ENCODE measurements at regions of chr19 and their contacts with region 1.

Region 1: DNA sequence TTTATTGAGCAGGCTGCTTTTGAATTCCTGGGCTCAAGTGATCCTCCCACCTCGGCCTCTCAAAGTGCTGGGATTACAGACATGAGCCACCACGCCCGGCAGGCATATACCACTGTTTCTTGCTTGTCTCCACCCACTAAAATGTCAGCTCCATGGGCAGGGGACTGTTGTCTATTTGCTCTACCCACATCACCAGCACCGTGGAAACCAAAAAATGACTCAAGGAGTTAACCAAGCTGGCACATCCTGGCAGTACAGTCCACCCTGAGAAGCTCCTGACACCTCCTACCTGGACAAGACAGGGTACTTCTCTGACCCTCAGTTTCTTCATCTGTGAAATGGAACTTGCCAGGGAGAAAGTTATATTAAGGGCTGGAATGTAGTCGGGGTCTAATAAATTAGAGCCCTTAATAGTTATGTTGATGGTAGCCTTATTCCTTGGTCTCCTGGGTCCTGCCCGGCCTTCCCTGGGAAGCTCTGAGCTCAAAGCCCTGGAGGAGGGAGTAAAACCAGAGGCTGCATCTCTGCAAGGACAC is 13.9 kb downstream of the RDH8 start:
- DNase-seq: no peak
- ATAC-seq: peak; percentile 55 to 57; a peak in 5 of 6 replicates
- H3K4me3 ChIP-seq: peak overlapping the region; percentile 26; the same call in 1 of the 3 replicates
- H3K27ac ChIP-seq: peak overlapping the region; percentile 60 to 76; a peak in 5 of 6 replicates
- H3K4me1 ChIP-seq: peaks cover 7% of the 10 kb centered on the region
- CTCF ChIP-seq: no peak
- EP300 ChIP-seq: no peak
- POLR2A ChIP-seq: no peak
- RAD21 ChIP-seq: no peak

Region 2: GRCh38 chr19:9934132-9934950 is 92.9 kb before region 1 on chr19:
- CTCF ChIA-PET with region 1: interaction called, 63 read pairs
- POLR2A ChIA-PET with region 1: no interaction called
- DNase-seq: peak; percentile 52 to 75
- ATAC-seq: peak; percentile 38 to 76
- H3K4me3 ChIP-seq: no peak overlapping the region
- H3K27ac ChIP-seq: no peak overlapping the region
- H3K4me1 ChIP-seq: peaks cover 17% of the 10 kb centered on the region
- CTCF ChIP-seq: peak; percentile 74
- EP300 ChIP-seq: no peak
- POLR2A ChIP-seq: no peak
- RAD21 ChIP-seq: peak; percentile 75 to 89

Region 3: DNA sequence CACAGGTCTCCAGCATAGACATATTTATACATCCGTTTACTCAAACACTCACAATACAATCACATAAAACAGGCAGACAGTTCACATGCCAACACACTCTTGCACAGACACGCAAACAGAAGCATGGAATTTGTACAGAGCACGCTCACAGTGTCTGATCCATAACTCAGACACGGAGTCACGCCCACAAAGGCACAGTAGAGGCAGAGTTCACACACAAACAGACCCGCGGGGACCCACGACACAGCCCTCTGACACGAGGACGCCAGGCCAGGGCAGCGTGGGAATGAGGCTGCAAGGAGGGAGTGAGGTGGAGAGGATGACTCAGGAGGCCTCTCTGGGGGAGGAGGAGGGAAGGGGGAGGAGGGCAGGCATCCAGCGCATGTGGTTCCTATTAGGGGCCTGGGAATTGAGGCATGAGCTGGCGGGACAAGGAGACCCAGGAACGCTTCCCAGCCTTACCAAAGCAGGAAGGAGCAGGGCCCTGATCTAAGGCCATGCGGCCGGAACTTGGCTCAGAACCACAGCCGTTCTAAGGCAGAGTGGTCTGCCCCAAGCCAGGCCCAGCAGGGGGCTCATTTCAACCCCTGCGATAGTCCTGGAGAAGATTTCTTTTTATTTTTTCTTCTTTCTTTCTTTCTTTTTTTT is 81.8 kb before region 1 on chr19:
- CTCF ChIA-PET with region 1: interaction called, 10 read pairs
- POLR2A ChIA-PET with region 1: no interaction called
- DNase-seq: peak in 1 of 2 experiments; percentile 37
- ATAC-seq: peak; percentile 70 to 87
- H3K4me3 ChIP-seq: no peak overlapping the region
- H3K27ac ChIP-seq: peak overlapping the region in 1 of 2 experiments; percentile 59; a peak in 2 of 6 replicates
- H3K4me1 ChIP-seq: peaks cover 7% of the 10 kb centered on the region; the same call in 2 of the 3 replicates
- CTCF ChIP-seq: no peak
- EP300 ChIP-seq: no peak
- POLR2A ChIP-seq: no peak
- RAD21 ChIP-seq: no peak

Region 4: GRCh38 chr19:10006335-10006708 is 20.9 kb before region 1 on chr19:
- CTCF ChIA-PET with region 1: interaction called, 19 read pairs
- POLR2A ChIA-PET with region 1: no interaction called
- DNase-seq: no peak
- ATAC-seq: no peak
- H3K4me3 ChIP-seq: no peak overlapping the region
- H3K27ac ChIP-seq: no peak overlapping the region
- H3K4me1 ChIP-seq: peaks cover 26% of the 10 kb centered on the region
- CTCF ChIP-seq: no peak
- EP300 ChIP-seq: no peak
- POLR2A ChIP-seq: no peak
- RAD21 ChIP-seq: no peak

Region 5: DNA sequence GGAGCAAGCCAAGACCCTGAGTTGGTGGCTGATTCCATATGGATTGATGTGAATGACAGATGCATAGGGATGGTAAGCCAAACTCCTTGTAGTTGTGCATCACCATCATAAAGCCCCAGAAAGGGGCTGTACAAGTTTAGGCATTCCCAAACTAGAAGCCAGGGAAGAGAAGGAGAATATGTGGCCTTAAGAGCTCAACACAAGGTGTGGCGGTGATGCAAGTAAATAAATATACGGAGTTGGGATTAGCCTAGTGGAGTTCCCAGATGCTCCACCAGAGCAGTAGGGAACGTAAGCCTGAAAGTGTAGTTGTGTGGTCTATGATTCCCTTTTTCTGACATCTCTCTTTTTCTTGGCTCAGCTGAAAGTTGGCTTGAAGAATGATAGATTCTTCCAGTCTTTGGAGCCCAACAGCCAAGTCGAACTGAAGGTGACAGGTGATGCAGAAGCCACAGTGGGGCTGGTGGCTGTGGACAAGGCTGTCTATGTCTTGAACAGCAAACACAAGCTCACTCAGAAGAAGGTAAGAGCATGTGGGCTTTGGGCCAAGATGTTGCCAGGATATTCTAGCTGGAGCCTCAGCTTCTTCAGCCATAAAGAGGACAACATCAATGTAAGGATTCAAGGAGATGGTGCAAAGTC is 16.2 kb after region 1 on chr19:
- CTCF ChIA-PET with region 1: interaction called, 14 read pairs
- POLR2A ChIA-PET with region 1: no interaction called
- DNase-seq: no peak
- ATAC-seq: no peak
- H3K4me3 ChIP-seq: no peak overlapping the region
- H3K27ac ChIP-seq: no peak overlapping the region
- H3K4me1 ChIP-seq: 0 out of 3 replicates have a peak, but pooled peaks cover under 1% of the 10 kb centered on the region
- CTCF ChIP-seq: no peak
- EP300 ChIP-seq: no peak
- POLR2A ChIP-seq: no peak
- RAD21 ChIP-seq: no peak

Measured in A549 (cell line).